ENCODE measurements at regions of chr2 and their contacts with region 1.

Region 1: DNA sequence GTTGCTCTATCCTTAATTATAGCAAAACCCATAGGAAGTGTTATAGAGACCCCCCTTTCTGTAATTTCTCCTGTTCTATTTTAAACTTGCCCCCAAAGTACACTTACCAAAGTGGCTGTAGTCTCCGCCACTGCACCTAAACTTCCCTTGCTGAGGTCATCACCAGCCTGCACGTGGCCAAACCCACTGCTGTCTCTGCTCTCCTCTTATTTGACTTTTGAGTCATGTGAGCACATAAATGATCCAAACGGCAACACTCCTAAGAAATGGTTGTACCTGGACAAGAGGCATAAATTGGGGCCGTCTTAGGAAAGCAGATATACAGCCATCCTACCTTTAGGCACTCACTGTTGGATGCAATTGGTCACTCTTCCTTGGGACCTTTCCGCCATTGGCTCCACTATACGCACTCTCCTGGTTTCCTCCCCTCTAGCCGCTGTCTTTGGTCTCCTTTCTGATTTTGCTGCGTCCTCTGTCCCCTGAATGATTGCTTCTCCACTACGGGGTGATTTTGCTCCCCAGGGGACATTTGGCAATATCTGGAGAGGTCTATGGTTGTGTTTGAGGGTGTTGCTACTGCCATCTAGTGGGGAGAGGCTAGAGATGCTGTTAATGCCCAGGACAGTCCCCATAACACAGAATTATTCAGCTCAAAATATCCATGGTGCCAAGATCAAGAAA is 19.2 kb upstream of the IL36G start:
- DNase-seq: peak; percentile 59 to 61
- H3K4me3 ChIP-seq: no peak overlapping the region
- H3K4me3 Mint-ChIP-seq: no peak overlapping the region
- H3K27ac Mint-ChIP-seq: no peak overlapping the region
- H3K4me1 ChIP-seq: peaks cover 5% of the 10 kb centered on the region; the same call in 1 of the 2 replicates
- H3K4me1 Mint-ChIP-seq: no peaks in the 10 kb centered on the region
- H3K27me3 ChIP-seq: no peaks in the 10 kb centered on the region
- H3K27me3 Mint-ChIP-seq: no peaks in the 10 kb centered on the region
- CTCF ChIP-seq: peak; percentile 80 to 83

Region 2: DNA sequence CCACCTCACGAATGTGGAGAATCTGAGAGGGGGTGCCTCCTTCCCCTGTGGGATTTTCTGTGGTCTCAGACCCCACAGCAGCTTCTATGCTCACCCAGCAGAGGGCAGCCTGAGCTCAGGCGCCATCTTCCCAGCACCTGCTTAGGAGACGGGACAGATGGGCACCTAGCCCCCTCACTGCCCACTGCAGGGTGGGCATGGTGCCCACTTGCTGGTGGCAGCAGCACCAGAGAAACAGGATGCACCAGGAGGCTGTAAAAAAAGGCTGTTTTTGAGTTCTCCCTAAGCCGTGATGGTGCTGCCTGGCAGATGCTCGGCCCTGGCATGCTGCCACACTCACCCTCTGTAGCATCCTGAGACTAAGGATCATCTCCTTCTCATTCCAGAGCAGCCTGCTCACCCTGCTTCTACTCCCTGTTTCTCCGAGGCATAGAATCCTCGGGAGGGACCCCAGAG is 331.9 kb before region 1 on chr2:
- CTCF ChIA-PET with region 1: interaction called, 4 read pairs
- POLR2A ChIA-PET with region 1: no interaction called
- intact Hi-C with region 1: loop called (anchors 10 kb)
- DNase-seq: peak; percentile 65 to 67
- H3K4me3 ChIP-seq: no peak overlapping the region
- H3K4me3 Mint-ChIP-seq: no peak overlapping the region
- H3K27ac Mint-ChIP-seq: no peak overlapping the region
- H3K4me1 ChIP-seq: peaks cover 15% of the 10 kb centered on the region
- H3K4me1 Mint-ChIP-seq: peaks cover 8% of the 10 kb centered on the region
- H3K27me3 ChIP-seq: no peaks in the 10 kb centered on the region
- H3K27me3 Mint-ChIP-seq: no peaks in the 10 kb centered on the region
- CTCF ChIP-seq: peak; percentile 66 to 92

Region 3: GRCh38 chr2:112666764-112667122 is 291.8 kb before region 1 on chr2:
- CTCF ChIA-PET with region 1: no interaction called
- POLR2A ChIA-PET with region 1: no interaction called
- intact Hi-C with region 1: no loop called
- DNase-seq: no peak
- H3K4me3 ChIP-seq: no peak overlapping the region
- H3K4me3 Mint-ChIP-seq: no peak overlapping the region
- H3K27ac Mint-ChIP-seq: no peak overlapping the region
- H3K4me1 ChIP-seq: peaks cover 7% of the 10 kb centered on the region
- H3K4me1 Mint-ChIP-seq: no peaks in the 10 kb centered on the region
- H3K27me3 ChIP-seq: no peaks in the 10 kb centered on the region
- H3K27me3 Mint-ChIP-seq: no peaks in the 10 kb centered on the region
- CTCF ChIP-seq: no peak

Region 4: GRCh38 chr2:112749755-112750559 is 208.6 kb before region 1 on chr2:
- CTCF ChIA-PET with region 1: interaction called, 12 read pairs
- POLR2A ChIA-PET with region 1: no interaction called
- intact Hi-C with region 1: loop called (anchors 1 kb)
- DNase-seq: peak; percentile 74 to 86
- H3K4me3 ChIP-seq: no peak overlapping the region
- H3K4me3 Mint-ChIP-seq: no peak overlapping the region
- H3K27ac Mint-ChIP-seq: peak overlapping the region; percentile 67
- H3K4me1 ChIP-seq: peaks cover 9% of the 10 kb centered on the region
- H3K4me1 Mint-ChIP-seq: peaks cover 7% of the 10 kb centered on the region
- H3K27me3 ChIP-seq: no peaks in the 10 kb centered on the region
- H3K27me3 Mint-ChIP-seq: no peaks in the 10 kb centered on the region
- CTCF ChIP-seq: peak; percentile 81 to 94

Region 5: DNA sequence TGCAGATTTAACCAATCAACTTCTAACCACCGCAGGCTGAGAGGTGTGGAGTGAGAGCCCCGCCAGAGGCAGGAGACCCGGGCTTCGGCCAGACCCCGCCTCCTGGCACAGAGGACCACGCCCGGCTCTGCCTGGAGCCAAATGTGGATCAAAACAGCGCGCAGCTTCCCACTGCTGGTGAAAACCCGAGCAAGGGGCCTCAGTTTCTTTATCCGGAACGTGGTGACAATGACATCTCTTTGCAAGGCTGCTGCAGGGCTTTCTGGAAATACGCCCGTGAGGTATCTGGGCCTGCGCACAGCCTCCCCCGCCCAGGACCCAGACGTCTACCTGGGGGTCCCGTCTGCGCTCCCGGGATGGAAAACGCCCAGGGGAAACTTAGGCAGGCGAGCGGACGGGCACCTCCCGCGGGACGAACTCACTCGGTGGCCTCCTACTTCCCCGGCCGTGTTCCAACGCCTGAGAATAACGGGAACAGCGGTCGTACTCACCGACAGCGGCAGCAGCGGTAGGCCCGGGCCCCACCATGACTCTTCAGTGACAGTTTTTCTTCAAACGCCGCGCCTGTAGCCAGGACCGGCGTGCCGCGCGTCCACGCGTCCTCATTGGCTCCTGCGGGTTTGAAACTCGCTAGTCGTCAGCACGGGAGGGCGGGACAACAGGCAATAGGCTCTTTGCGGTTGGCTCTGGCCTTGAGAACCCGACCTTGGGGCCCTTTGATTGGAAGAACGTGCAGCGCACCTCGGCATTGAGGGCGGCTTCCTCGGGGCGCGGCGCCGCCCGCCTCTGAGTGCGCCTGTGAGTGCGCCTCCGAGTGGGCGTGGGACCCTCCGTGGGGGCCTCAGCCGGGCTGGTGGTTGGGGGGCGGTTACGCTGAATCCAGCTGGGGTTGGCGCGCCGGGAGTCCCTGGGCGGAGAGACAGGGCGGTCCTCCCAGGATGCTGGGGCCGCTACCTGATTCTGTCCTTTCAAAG is 194.2 kb before region 1 on chr2 and contains the start of gene CKAP2L:
- CTCF ChIA-PET with region 1: interaction called, 3 read pairs
- POLR2A ChIA-PET with region 1: no interaction called
- intact Hi-C with region 1: loop called (anchors 5 kb)
- DNase-seq: peak; percentile 97 to 98
- H3K4me3 ChIP-seq: peak within 1 kb of the TSS; percentile 76
- H3K4me3 Mint-ChIP-seq: peak within 1 kb of the TSS; percentile 100
- H3K27ac Mint-ChIP-seq: peak within 1 kb of the TSS; percentile 98
- H3K4me1 ChIP-seq: peaks cover 15% of the 10 kb centered on the region
- H3K4me1 Mint-ChIP-seq: peaks cover 28% of the 10 kb centered on the region
- H3K27me3 ChIP-seq: no peaks in the 10 kb centered on the region
- H3K27me3 Mint-ChIP-seq: no peaks in the 10 kb centered on the region
- CTCF ChIP-seq: no peak
- total RNA-seq, gene CKAP2L: 20.7 and 23.6 TPM in 2 replicates

Region 6: GRCh38 chr2:112884869-112885505 is 73.6 kb before region 1 on chr2:
- CTCF ChIA-PET with region 1: no interaction called
- POLR2A ChIA-PET with region 1: no interaction called
- intact Hi-C with region 1: loop called (anchors 2 kb)
- DNase-seq: peak; percentile 60 to 72
- H3K4me3 ChIP-seq: no peak overlapping the region
- H3K4me3 Mint-ChIP-seq: no peak overlapping the region
- H3K27ac Mint-ChIP-seq: no peak overlapping the region
- H3K4me1 ChIP-seq: no peaks in the 10 kb centered on the region
- H3K4me1 Mint-ChIP-seq: no peaks in the 10 kb centered on the region
- H3K27me3 ChIP-seq: no peaks in the 10 kb centered on the region
- H3K27me3 Mint-ChIP-seq: no peaks in the 10 kb centered on the region
- CTCF ChIP-seq: peak; percentile 41 to 85

Region 7: DNA sequence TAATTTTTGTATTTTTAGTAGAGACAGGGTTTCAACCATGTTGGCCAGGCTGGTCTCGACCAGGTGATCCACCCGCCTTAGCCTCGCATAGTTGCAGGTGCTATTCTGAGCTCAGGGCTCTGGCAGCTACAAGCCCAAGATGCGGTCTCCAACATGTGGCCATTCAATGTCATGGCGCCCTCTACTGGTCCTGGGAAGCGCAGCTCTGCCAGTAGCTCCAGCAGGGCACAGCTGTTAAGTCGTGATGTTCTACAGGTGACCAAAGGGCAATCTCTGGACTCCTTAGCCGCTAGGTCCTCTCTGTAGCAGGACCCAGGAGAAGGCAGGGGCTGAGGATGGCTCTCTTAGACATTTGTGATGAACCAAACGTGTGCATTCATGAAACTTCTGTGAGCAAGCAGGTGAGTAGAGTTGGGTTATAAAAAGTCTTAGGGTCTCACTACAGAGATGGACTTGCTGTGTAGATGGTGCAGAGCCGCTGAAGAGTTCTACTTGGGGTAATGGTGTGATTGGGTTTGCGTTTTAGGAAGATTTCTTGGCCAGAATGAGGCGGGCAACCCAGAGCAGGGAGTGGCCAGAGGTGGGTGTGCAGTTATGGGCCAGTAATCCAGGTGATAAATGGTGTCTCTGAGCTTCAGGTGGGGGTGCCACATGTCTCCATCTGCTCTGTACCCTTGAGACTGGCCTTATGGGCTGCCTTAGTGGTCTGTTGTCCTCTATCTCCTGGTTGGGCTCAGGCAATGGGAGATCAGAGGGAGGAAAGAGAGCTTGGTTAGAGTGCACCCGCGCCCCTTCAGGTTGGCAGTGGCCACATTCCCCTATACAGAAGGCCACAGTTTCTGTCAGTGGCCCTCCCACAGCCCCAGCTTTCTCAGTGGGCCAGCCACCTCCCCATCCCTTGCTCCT is 16.6 kb before region 1 on chr2:
- CTCF ChIA-PET with region 1: interaction called, 19 read pairs
- POLR2A ChIA-PET with region 1: no interaction called
- intact Hi-C with region 1: no loop called
- DNase-seq: peak; percentile 79 to 84
- H3K4me3 ChIP-seq: no peak overlapping the region
- H3K4me3 Mint-ChIP-seq: no peak overlapping the region
- H3K27ac Mint-ChIP-seq: no peak overlapping the region
- H3K4me1 ChIP-seq: peaks cover 9% of the 10 kb centered on the region; the same call in 1 of the 2 replicates
- H3K4me1 Mint-ChIP-seq: peaks cover 5% of the 10 kb centered on the region
- H3K27me3 ChIP-seq: no peaks in the 10 kb centered on the region
- H3K27me3 Mint-ChIP-seq: no peaks in the 10 kb centered on the region
- CTCF ChIP-seq: peak; percentile 80 to 84

Region 8: DNA sequence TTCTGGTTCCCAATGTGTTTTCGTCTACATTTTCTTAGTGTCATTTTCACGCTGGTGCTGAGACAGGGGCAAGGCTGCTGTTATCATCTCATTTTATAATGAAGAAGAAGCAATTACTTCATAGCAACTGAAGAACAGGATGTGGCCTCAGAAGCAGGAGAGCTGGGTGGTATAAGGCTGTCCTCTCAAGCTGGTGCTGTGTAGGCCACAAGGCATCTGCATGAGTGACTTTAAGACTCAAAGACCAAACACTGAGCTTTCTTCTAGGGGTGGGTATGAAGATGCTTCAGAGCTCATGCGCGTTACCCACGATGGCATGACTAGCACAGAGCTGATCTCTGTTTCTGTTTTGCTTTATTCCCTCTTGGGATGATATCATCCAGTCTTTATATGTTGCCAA is 26.5 kb after region 1 on chr2:
- CTCF ChIA-PET with region 1: interaction called, 12 read pairs
- POLR2A ChIA-PET with region 1: no interaction called
- intact Hi-C with region 1: no loop called
- DNase-seq: no peak
- H3K4me3 ChIP-seq: no peak overlapping the region
- H3K4me3 Mint-ChIP-seq: no peak overlapping the region
- H3K27ac Mint-ChIP-seq: no peak overlapping the region
- H3K4me1 ChIP-seq: 0 out of 2 replicates have a peak, but pooled peaks cover under 1% of the 10 kb centered on the region
- H3K4me1 Mint-ChIP-seq: no peaks in the 10 kb centered on the region
- H3K27me3 ChIP-seq: no peaks in the 10 kb centered on the region
- H3K27me3 Mint-ChIP-seq: no peaks in the 10 kb centered on the region
- CTCF ChIP-seq: no peak

Region 9: DNA sequence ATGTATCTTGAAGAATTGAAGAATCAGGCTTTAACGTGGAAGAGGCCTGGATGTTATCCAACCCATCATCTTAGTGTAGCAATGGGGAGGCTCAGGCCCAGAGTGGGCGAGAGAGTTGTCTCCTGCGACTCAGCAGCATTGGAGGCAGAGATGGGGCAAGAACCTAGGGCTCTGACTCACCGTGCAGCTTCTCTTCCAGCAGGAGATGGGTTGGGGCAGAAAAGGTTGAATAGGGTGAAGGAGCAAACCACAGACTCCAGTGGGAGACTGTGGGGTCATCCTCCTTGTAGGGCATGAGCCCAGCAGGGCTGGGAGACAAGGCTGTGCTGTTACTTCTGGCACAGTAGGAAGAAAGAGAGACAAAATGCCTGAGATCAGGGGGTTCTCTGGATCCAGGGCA is 101.8 kb after region 1 on chr2:
- CTCF ChIA-PET with region 1: no interaction called
- POLR2A ChIA-PET with region 1: no interaction called
- intact Hi-C with region 1: no loop called
- DNase-seq: no peak
- H3K4me3 ChIP-seq: no peak overlapping the region
- H3K4me3 Mint-ChIP-seq: no peak overlapping the region
- H3K27ac Mint-ChIP-seq: no peak overlapping the region
- H3K4me1 ChIP-seq: peaks cover 9% of the 10 kb centered on the region
- H3K4me1 Mint-ChIP-seq: peaks cover 7% of the 10 kb centered on the region
- H3K27me3 ChIP-seq: no peaks in the 10 kb centered on the region
- H3K27me3 Mint-ChIP-seq: no peaks in the 10 kb centered on the region
- CTCF ChIP-seq: no peak